ENCODE measurements at regions of chr20 and their contacts with region 1.

Region 1: DNA sequence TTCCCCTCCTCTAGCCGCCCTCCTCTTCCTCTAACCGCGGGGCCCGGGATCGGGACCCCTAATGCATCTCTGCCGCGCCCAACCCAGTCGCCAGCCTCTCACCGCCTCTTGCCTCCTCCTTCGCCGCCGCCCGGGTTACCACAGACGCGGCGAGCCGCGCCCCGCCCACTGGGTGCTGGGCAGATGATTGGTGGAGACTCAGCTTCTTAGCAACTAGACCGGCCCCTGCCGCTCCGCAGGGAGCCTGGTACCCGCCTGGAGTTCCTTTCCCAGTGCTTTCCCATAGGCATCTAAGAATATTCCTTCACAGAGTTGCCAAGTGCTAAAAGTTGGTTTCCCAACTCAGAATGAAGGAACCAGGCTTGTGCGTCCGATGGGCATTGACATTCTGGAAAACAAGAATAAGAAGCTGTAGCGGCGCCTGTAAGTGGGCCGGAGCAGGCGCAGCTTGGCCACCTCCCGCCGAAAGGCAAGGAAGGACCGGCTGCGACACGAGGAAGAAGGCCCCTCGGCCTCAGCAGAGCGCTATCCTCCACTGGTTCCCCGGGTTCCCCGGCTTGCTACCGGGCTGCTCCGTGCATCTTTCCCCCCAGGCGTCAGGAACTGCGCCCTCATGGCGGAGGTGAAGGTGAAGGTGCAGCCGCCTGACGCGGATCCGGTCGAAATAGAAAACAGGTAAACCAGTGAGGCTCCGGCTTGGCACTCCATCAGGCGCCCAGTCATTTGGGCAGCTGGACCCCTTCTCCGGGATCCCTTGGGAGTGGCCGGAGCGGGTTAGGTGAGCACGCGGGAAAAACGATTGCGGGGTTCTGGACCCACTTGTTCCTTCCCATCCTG is at the starts of genes DZANK1 and POLR3F:
- DNase-seq: peak; percentile 96
- H3K4me3 Mint-ChIP-seq: peak within 1 kb of the TSS; percentile 95
- H3K27ac Mint-ChIP-seq: peak within 1 kb of the TSS; percentile 87
- H3K4me1 Mint-ChIP-seq: peaks cover 23% of the 10 kb centered on the region
- H3K27me3 Mint-ChIP-seq: no peaks in the 10 kb centered on the region
- total RNA-seq, gene DZANK1: 1.4 to 1.6 TPM
- total RNA-seq, gene POLR3F: 11.0 to 11.3 TPM

Region 2: DNA sequence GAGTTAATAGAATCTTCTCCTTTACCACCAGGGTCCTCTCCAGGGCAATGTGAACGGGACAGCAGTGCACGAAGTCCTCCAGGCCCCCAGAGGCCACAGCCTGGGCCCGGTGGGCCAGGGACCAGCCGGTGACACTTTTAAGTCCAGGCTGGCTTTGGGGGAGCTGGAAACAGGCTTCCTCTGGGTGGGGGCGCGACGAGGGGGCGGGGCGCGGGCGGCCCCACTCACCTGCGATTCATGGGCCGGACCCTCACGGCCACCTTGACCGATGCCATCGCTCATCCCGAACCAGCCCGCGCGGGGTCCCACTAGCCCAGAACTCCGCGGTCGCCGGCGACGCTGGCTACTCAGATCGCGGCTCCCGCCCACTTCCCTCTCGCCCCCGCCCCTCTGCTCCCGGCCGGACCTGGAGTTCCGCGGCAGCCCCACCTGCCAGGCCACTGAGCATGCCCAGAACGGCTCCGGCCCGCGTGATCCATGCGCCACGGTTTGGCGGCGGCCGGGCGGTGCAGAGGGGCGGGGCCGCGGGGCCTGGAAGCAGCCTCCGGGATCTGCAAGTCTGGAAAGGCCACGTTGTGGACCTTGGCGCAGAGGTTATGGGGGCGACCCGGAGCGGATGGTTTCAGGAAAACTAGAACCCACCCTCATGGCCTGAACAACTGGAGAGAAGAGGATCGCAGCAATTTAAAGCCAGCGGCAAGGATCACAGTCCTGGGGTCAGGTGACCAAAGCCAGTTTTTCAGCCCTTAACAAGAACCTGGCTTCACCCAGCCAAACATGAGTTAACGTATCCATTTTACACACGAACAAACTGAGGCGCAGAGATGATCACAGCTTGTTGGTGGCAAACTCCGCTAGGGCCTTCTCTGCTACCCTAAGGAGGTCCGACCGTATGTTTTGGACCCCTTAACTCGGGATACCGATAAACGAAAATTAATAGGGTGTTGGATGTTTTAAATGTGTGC is 1893.8 kb before region 1 on chr20 and contains the start of gene KIF16B:
- CTCF ChIA-PET with region 1: no interaction called
- POLR2A ChIA-PET with region 1: no interaction called
- intact Hi-C with region 1: loop called (anchors 10 kb)
- DNase-seq: peak; percentile 92
- H3K4me3 Mint-ChIP-seq: peak within 1 kb of the TSS; percentile 87
- H3K27ac Mint-ChIP-seq: peak within 1 kb of the TSS; percentile 75
- H3K4me1 Mint-ChIP-seq: peaks cover 45% of the 10 kb centered on the region
- H3K27me3 Mint-ChIP-seq: no peaks in the 10 kb centered on the region
- total RNA-seq, gene KIF16B: 7.7 to 7.9 TPM

Region 3: DNA sequence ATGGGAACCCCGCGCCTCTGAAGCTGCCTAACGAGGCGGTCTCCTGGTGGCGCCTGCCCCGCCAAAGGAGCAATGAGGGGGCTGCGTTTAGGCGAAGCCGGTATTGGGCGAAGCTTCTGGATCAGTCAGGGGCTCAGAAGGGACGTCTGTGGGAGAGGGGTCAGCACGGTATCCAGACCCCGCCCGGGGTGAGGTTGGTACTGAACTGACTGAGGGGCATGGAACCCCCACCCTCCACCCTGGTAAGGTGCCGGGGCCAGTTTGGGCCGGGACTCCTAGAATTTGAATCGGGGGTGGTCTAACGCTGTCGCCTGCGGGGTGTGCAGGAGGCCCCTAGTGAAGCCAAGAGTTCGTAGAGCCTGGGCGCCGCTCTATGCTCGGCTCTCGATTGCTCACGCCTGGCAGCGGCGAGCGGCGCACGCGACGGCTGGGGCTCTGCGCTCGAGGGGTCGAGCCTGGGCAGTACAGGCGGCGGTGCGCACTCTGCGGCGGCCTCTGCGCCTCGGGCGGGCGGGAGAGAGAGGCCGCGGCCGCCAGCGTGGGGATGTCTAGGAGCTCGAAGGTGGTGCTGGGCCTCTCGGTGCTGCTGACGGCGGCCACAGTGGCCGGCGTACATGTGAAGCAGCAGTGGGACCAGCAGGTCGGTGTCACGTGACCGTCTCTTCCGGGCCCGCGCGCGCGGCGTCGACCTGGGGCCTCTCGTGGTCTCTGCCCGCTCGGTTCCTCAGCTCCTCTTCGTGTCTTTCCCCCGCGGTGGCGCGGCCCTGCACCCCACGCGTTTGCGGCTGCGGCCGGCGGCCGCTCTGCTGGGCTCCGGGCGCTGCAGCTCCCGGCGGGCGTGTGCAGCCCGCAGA is 329.5 kb before region 1 on chr20 and contains the starts of genes KAT14 and PET117:
- CTCF ChIA-PET with region 1: no interaction called
- POLR2A ChIA-PET with region 1: interaction called, 5 read pairs
- intact Hi-C with region 1: loop called (anchors 5 kb)
- DNase-seq: peak; percentile 93
- H3K4me3 Mint-ChIP-seq: peak within 1 kb of the TSS; percentile 65
- H3K27ac Mint-ChIP-seq: peak within 1 kb of the TSS; percentile 76
- H3K4me1 Mint-ChIP-seq: peaks cover 29% of the 10 kb centered on the region
- H3K27me3 Mint-ChIP-seq: no peaks in the 10 kb centered on the region
- total RNA-seq, gene KAT14: 14.2 to 14.4 TPM
- total RNA-seq, gene PET117: 15.2 to 15.9 TPM

Region 4: GRCh38 chr20:18496740-18497592 is 29.9 kb after region 1 on chr20 and contains the start of gene RBBP9:
- CTCF ChIA-PET with region 1: interaction called, 9 read pairs
- POLR2A ChIA-PET with region 1: interaction called, 14 read pairs
- intact Hi-C with region 1: loop called (anchors 1 kb)
- DNase-seq: peak; percentile 87
- H3K4me3 Mint-ChIP-seq: peak within 1 kb of the TSS; percentile 98
- H3K27ac Mint-ChIP-seq: peak within 1 kb of the TSS; percentile 84
- H3K4me1 Mint-ChIP-seq: peaks cover 9% of the 10 kb centered on the region
- H3K27me3 Mint-ChIP-seq: no peaks in the 10 kb centered on the region
- total RNA-seq, gene RBBP9: 15.9 to 17.7 TPM

Region 5: GRCh38 chr20:18587665-18588573 is 120.8 kb after region 1 on chr20 and contains the start of gene DTD1:
- CTCF ChIA-PET with region 1: no interaction called
- POLR2A ChIA-PET with region 1: no interaction called
- intact Hi-C with region 1: loop called (anchors 1 kb)
- DNase-seq: peak; percentile 94
- H3K4me3 Mint-ChIP-seq: peak within 1 kb of the TSS; percentile 86
- H3K27ac Mint-ChIP-seq: peak within 1 kb of the TSS; percentile 77
- H3K4me1 Mint-ChIP-seq: peaks cover 32% of the 10 kb centered on the region
- H3K27me3 Mint-ChIP-seq: peaks cover 5% of the 10 kb centered on the region
- total RNA-seq, gene DTD1: 49.2 to 55.4 TPM

Region 6: GRCh38 chr20:18728165-18728869 is 261.2 kb after region 1 on chr20:
- CTCF ChIA-PET with region 1: no interaction called
- POLR2A ChIA-PET with region 1: no interaction called
- intact Hi-C with region 1: no loop called
- DNase-seq: no peak
- H3K4me3 Mint-ChIP-seq: no peak overlapping the region
- H3K27ac Mint-ChIP-seq: no peak overlapping the region
- H3K4me1 Mint-ChIP-seq: peaks cover 21% of the 10 kb centered on the region
- H3K27me3 Mint-ChIP-seq: no peaks in the 10 kb centered on the region

Measured in activated CD4-positive, alpha-beta memory T cell treated with anti-CD3 and anti-CD28 coated beads for 36 hours (primary cell).